ENCODE measurements at regions of chr21 and their contacts with region 1.

Region 1: DNA sequence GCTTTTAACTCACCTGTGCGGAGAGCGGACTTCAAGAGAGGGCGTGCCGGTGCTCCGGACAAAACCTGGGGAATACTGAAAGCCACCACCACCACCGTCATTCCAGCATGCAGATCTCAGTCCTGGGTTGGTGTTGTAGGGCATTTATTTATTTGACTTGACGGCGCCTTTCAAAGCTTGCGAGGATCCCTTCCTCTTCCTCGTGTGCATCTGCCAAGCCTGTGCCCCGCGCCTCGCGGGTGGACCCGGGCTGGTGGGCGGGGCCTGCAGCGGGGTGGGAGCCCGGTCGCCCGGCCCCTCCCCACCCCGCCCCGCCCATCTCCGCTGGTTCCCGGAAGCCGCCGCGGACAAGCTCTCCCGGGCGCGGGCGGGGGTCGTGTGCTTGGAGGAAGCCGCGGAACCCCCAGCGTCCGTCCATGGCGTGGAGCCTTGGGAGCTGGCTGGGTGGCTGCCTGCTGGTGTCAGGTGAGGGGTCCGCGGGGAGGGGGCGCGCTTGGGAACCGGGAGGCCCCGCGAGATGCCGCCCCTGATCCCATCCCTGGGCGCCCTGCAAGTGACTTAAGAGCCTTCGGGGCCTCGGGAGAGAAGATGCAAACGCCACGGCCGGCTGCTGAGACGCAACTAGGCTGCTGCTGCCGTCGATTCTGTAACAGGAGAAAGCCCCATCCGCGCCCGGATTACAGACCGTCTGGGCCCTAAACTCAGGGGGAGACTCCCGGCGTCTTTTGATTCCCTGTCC is at the start of gene IL10RB:
- DNase-seq: peak; percentile 47 to 81 (median 70)
- ATAC-seq: peak; percentile 78 to 85
- H3K4me3 Mint-ChIP-seq: peak within 1 kb of the TSS; percentile 91 to 99 (median 96)
- H3K27ac Mint-ChIP-seq: peak within 1 kb of the TSS; percentile 90 to 98 (median 96)
- H3K4me1 Mint-ChIP-seq: peaks cover 38 to 80% (median 66%) of the 10 kb centered on the region in 4 donors
- H3K27me3 Mint-ChIP-seq: no peaks in the 10 kb centered on the region
- polyA plus RNA-seq, gene IL10RB: 44.6 to 50.6 (median 50.5) TPM

Region 2: GRCh38 chr21:32979598-32980268 is 286.5 kb before region 1 on chr21:
- POLR2A ChIA-PET with region 1: no interaction called
- DNase-seq: no peak
- ATAC-seq: no peak
- H3K4me3 Mint-ChIP-seq: no peak overlapping the region
- H3K27ac Mint-ChIP-seq: peak overlapping the region in 2 of 10 donors; percentile 37 to 94
- H3K4me1 Mint-ChIP-seq: peaks cover 0 to 4% (median 0%) of the 10 kb centered on the region in 4 donors
- H3K27me3 Mint-ChIP-seq: peaks cover 15 to 47% (median 28%) of the 10 kb centered on the region in 5 donors

Region 3: DNA sequence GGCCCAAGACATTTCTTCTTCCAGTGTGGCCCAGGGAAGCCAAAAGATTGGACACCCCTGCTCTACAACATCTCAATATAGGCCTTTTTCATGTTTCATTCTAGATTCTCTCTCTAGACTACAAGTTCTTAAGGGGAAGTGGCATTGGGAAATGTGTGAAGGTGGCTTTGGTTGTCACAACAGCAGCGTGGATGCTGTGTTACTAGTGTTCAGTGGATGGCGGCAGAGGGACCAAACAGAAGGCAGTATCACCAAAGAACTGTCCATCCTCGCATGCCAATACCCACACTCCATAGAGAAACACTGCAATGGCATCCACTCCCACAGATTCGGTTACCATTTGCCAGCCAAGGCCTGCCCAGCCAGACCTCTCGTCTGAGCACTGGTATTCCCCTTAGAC is 60.7 kb before region 1 on chr21:
- POLR2A ChIA-PET with region 1: interaction called, 13 read pairs
- DNase-seq: peak in 2 of 10 donors; percentile 30 to 32
- ATAC-seq: peak; percentile 27 to 63
- H3K4me3 Mint-ChIP-seq: peak overlapping the region; percentile 4 to 80 (median 64)
- H3K27ac Mint-ChIP-seq: peak overlapping the region; percentile 50 to 95 (median 84)
- H3K4me1 Mint-ChIP-seq: peaks cover 41 to 82% (median 69%) of the 10 kb centered on the region in 4 donors
- H3K27me3 Mint-ChIP-seq: no peaks in the 10 kb centered on the region

Region 4: DNA sequence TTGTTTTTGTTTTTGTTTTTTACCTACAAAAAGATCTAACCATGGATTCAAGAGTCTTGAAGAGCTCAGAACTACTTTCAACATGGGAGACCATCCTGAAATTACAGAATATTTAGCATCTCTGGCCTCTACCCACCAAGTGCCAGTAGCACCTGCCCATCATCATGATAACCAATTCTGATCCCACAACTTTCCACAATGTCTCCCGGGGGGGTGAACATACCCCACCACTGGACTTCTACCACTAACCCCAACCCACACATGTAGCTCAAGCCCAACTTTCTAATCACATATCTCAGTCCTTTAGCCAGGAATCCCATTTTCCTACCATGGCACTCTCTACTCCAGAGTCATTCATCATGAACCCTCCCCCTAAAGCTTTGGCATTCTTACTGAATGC is 52.2 kb before region 1 on chr21:
- POLR2A ChIA-PET with region 1: interaction called, 10 read pairs
- DNase-seq: no peak
- ATAC-seq: no peak
- H3K4me3 Mint-ChIP-seq: peak overlapping the region in 7 of 10 donors; percentile 5 to 80 (median 55)
- H3K27ac Mint-ChIP-seq: peak overlapping the region; percentile 86 to 99 (median 93)
- H3K4me1 Mint-ChIP-seq: peaks cover 42 to 87% (median 85%) of the 10 kb centered on the region in 4 donors
- H3K27me3 Mint-ChIP-seq: no peaks in the 10 kb centered on the region

Region 5: GRCh38 chr21:33244082-33244778 is 22.0 kb before region 1 on chr21:
- POLR2A ChIA-PET with region 1: interaction called, 20 read pairs
- DNase-seq: no peak
- ATAC-seq: peak; percentile 38 to 51
- H3K4me3 Mint-ChIP-seq: peak overlapping the region in 9 of 10 donors; percentile 11 to 83 (median 67)
- H3K27ac Mint-ChIP-seq: peak overlapping the region; percentile 70 to 96 (median 91)
- H3K4me1 Mint-ChIP-seq: peaks cover 49 to 89% (median 85%) of the 10 kb centered on the region in 4 donors
- H3K27me3 Mint-ChIP-seq: no peaks in the 10 kb centered on the region

Region 6: GRCh38 chr21:33299181-33299752 is 33.0 kb after region 1 on chr21:
- POLR2A ChIA-PET with region 1: interaction called, 13 read pairs
- DNase-seq: peak in 9 of 10 donors; percentile 17 to 72 (median 34)
- ATAC-seq: peak; percentile 91 to 94
- H3K4me3 Mint-ChIP-seq: peak overlapping the region; percentile 52 to 83 (median 72)
- H3K27ac Mint-ChIP-seq: peak overlapping the region; percentile 80 to 90 (median 86)
- H3K4me1 Mint-ChIP-seq: peaks cover 21 to 69% (median 49%) of the 10 kb centered on the region in 4 donors
- H3K27me3 Mint-ChIP-seq: no peaks in the 10 kb centered on the region